Natural killer cell (primary cell): ENCODE measurements at regions of chr2 and their contacts with region 1.

Region 1: DNA sequence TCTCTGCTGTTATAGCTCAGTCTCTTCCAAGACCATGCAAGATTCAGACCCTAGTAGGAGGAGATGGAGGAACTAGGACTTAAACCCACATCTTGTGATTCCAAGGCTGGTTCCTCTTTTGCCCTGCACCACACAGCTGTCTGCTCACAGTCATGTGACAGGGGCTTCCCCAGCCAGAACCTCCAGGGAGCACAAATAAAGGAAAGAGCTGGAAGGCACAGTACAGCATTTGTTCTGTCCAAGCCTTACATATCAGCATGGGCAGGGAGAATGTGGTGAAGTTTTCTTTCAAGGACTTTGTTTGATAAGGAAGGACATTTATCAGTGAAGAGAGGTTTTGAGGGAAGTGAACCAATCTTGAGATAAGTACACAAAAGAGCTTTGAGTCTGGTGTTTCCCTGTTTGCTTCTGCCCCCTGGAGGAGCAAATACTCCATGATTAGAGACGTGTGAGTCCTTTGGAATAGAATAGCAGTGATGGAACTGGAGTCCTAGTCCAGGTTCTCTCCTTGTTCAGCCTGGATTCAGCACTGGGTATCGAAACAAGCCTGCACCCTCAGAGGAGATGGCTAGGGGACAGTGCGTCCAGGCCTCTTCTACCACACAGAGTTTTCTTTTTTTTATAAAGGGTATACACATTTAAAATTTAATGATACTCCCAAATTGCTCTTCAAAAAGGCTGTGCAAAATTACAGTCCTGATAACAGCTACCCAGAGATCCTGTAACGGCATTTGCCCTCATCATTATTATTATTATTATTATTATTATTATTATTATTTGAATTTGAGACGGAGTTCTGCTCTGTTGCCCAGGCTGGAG is 24.6 kb upstream of the CASP10 start:
- DNase-seq: peak in 1 of 2 donors; percentile 84
- ATAC-seq: peak; percentile 84 to 89 (median 86)
- H3K4me3 ChIP-seq: no peak overlapping the region
- H3K4me3 Mint-ChIP-seq: no peak overlapping the region
- H3K27ac ChIP-seq: peak overlapping the region; percentile 79
- H3K27ac Mint-ChIP-seq: peak overlapping the region; percentile 86 to 88
- H3K4me1 ChIP-seq: peaks cover 27% of the 10 kb centered on the region
- H3K4me1 Mint-ChIP-seq: peaks cover 32 to 37% of the 10 kb centered on the region in 2 donors
- H3K27me3 ChIP-seq: no peaks in the 10 kb centered on the region
- H3K27me3 Mint-ChIP-seq: no peaks in the 10 kb centered on the region
- CTCF ChIP-seq: peak; percentile 37

Region 2: GRCh38 chr2:200901459-200902072 is 256.8 kb before region 1 on chr2:
- intact Hi-C with region 1: loop called (anchors 1 kb)
- DNase-seq: peak; percentile 55 to 91
- ATAC-seq: peak; percentile 100
- H3K4me3 ChIP-seq: no peak overlapping the region
- H3K4me3 Mint-ChIP-seq: no peak overlapping the region
- H3K27ac ChIP-seq: peak overlapping the region; percentile 34
- H3K27ac Mint-ChIP-seq: peak overlapping the region; percentile 63
- H3K4me1 ChIP-seq: no peaks in the 10 kb centered on the region
- H3K4me1 Mint-ChIP-seq: peaks cover 6 to 8% of the 10 kb centered on the region in 2 donors
- H3K27me3 ChIP-seq: no peaks in the 10 kb centered on the region
- H3K27me3 Mint-ChIP-seq: no peaks in the 10 kb centered on the region
- CTCF ChIP-seq: peak; percentile 87

Region 3: GRCh38 chr2:200963124-200963917 is 195.0 kb before region 1 on chr2 and contains the start of gene ORC2:
- intact Hi-C with region 1: loop called (anchors 5 kb)
- DNase-seq: peak; percentile 94 to 96
- ATAC-seq: peak; percentile 95 to 99 (median 96)
- H3K4me3 ChIP-seq: peak within 1 kb of the TSS; percentile 75
- H3K4me3 Mint-ChIP-seq: peak within 1 kb of the TSS; percentile 98
- H3K27ac ChIP-seq: peak within 1 kb of the TSS; percentile 86
- H3K27ac Mint-ChIP-seq: peak within 1 kb of the TSS; percentile 98
- H3K4me1 ChIP-seq: peaks cover 8% of the 10 kb centered on the region
- H3K4me1 Mint-ChIP-seq: peaks cover 34 to 47% of the 10 kb centered on the region in 2 donors
- H3K27me3 ChIP-seq: no peaks in the 10 kb centered on the region
- H3K27me3 Mint-ChIP-seq: no peaks in the 10 kb centered on the region
- CTCF ChIP-seq: peak; percentile 71
- total RNA-seq, gene ORC2: 21.7 to 48.5 (median 26.1) TPM

Region 4: GRCh38 chr2:201118121-201118960 is 40.0 kb before region 1 on chr2:
- intact Hi-C with region 1: loop called (anchors 2 kb)
- DNase-seq: peak; percentile 87 to 93
- ATAC-seq: peak; percentile 46 to 61 (median 54)
- H3K4me3 ChIP-seq: peak overlapping the region; percentile 90
- H3K4me3 Mint-ChIP-seq: peak overlapping the region; percentile 95
- H3K27ac ChIP-seq: peak overlapping the region; percentile 93
- H3K27ac Mint-ChIP-seq: peak overlapping the region; percentile 93 to 100
- H3K4me1 ChIP-seq: peaks cover 50% of the 10 kb centered on the region
- H3K4me1 Mint-ChIP-seq: peaks cover 79 to 82% of the 10 kb centered on the region in 2 donors
- H3K27me3 ChIP-seq: no peaks in the 10 kb centered on the region
- H3K27me3 Mint-ChIP-seq: no peaks in the 10 kb centered on the region
- CTCF ChIP-seq: peak; percentile 40

Region 5: GRCh38 chr2:201500534-201500933 is 342.2 kb after region 1 on chr2:
- intact Hi-C with region 1: no loop called
- DNase-seq: no peak
- ATAC-seq: no peak
- H3K4me3 ChIP-seq: no peak overlapping the region
- H3K4me3 Mint-ChIP-seq: no peak overlapping the region
- H3K27ac ChIP-seq: no peak overlapping the region
- H3K27ac Mint-ChIP-seq: no peak overlapping the region
- H3K4me1 ChIP-seq: no peaks in the 10 kb centered on the region
- H3K4me1 Mint-ChIP-seq: no peaks in the 10 kb centered on the region
- H3K27me3 ChIP-seq: no peaks in the 10 kb centered on the region
- H3K27me3 Mint-ChIP-seq: peaks cover 3 to 6% of the 10 kb centered on the region in 2 donors
- CTCF ChIP-seq: no peak